ENCODE measurements at regions of chr10 and their contacts with region 1.

Region 1: GRCh38 chr10:88835096-88835909 is 16.3 kb downstream of the ANKRD22 start:
- DNase-seq: peak; percentile 95
- ATAC-seq: peak; percentile 91
- H3K4me3 Mint-ChIP-seq: no peak overlapping the region
- H3K27ac Mint-ChIP-seq: no peak overlapping the region
- H3K4me1 Mint-ChIP-seq: peaks cover 34% of the 10 kb centered on the region
- H3K27me3 Mint-ChIP-seq: no peaks in the 10 kb centered on the region

Region 2: DNA sequence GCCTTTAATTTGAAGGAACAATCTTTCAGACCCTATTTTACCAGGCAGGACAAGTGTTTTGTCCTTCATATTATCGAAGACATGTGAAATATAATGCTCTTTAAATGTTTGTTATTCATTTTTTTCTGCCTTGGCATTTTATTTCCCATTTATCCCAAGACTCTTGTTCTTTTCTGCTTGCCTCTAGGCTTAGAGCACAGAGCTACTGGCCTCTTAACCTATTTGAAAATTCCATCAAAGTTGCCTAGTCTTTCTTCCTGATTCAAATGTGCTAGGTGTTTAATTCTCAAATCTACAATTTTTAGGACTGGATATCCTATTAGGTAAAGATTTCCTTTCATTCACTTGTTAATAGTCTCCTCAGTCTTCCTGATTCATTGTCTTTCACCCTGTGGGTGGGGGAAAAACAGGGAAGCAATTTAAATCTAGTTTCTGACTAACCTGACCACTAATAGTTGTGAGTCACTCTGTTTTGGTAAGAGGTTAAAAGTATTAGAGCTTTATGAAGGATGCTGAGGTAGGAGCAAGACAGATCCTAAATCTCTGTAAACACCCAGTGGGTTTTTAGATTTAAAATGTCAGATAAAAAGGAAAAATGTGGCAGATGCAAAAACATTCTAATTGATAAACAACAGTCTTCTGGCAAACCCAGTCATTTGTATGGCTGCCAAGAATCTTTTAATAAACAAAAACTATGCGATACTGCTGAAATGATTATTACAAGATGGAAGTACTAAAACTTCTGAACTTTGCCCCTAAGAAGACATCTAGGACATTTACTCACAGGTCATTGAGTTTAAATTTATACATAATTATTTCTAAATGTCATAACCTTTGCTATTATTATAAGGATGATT is 127.6 kb before region 1 on chr10:
- CTCF ChIA-PET with region 1: no interaction called
- DNase-seq: no peak
- ATAC-seq: no peak
- H3K4me3 Mint-ChIP-seq: no peak overlapping the region
- H3K27ac Mint-ChIP-seq: no peak overlapping the region
- H3K4me1 Mint-ChIP-seq: no peaks in the 10 kb centered on the region
- H3K27me3 Mint-ChIP-seq: peaks cover 8% of the 10 kb centered on the region

Region 3: GRCh38 chr10:88851706-88852105 is 16.4 kb after region 1 on chr10 and contains the start of gene ANKRD22:
- CTCF ChIA-PET with region 1: interaction called, 24 read pairs
- DNase-seq: no peak
- ATAC-seq: no peak
- H3K4me3 Mint-ChIP-seq: no peak within 1 kb of the TSS
- H3K27ac Mint-ChIP-seq: no peak within 1 kb of the TSS
- H3K4me1 Mint-ChIP-seq: peaks cover 35% of the 10 kb centered on the region
- H3K27me3 Mint-ChIP-seq: no peaks in the 10 kb centered on the region
- total RNA-seq, gene ANKRD22: 0.37 TPM in 1 of 2 experiments, not detected in the other

Region 4: GRCh38 chr10:88880282-88881076 is 45.2 kb after region 1 on chr10:
- CTCF ChIA-PET with region 1: interaction called, 39 read pairs
- DNase-seq: peak; percentile 92
- ATAC-seq: peak; percentile 79
- H3K4me3 Mint-ChIP-seq: peak overlapping the region; percentile 99
- H3K27ac Mint-ChIP-seq: peak overlapping the region; percentile 99
- H3K4me1 Mint-ChIP-seq: peaks cover 57% of the 10 kb centered on the region
- H3K27me3 Mint-ChIP-seq: no peaks in the 10 kb centered on the region

Region 5: DNA sequence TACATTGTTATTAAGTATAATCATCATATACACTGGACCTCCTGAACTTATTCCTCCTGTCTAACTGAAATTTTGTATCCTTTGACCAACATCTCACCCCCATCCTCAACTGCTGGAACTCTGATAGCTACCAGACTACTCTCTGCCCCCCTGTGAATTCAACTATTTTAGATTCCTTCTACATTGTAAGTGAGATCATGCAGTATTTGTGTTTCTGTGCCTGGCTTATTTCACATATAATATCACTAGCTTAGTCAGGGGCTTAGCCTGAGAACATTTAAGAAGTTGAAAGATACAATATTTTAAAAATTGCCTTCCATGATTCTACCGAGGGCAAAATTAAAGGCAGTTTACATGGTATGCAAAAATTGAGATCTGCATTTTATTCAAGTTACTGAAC is 71.6 kb after region 1 on chr10:
- CTCF ChIA-PET with region 1: interaction called, 31 read pairs
- DNase-seq: no peak
- ATAC-seq: no peak
- H3K4me3 Mint-ChIP-seq: no peak overlapping the region
- H3K27ac Mint-ChIP-seq: no peak overlapping the region
- H3K4me1 Mint-ChIP-seq: peaks cover 4% of the 10 kb centered on the region
- H3K27me3 Mint-ChIP-seq: no peaks in the 10 kb centered on the region

Region 6: GRCh38 chr10:89251409-89252224 is 416.3 kb after region 1 on chr10 and contains the start of gene LIPA:
- CTCF ChIA-PET with region 1: no interaction called
- DNase-seq: peak; percentile 97
- ATAC-seq: peak; percentile 98
- H3K4me3 Mint-ChIP-seq: peak within 1 kb of the TSS; percentile 88
- H3K27ac Mint-ChIP-seq: peak within 1 kb of the TSS; percentile 82
- H3K4me1 Mint-ChIP-seq: peaks cover 28% of the 10 kb centered on the region
- H3K27me3 Mint-ChIP-seq: peaks cover 14% of the 10 kb centered on the region
- total RNA-seq, gene LIPA: 24.0 to 28.5 TPM

Measured in activated CD8-positive, alpha-beta memory T cell treated with anti-CD3 and anti-CD28 coated beads, Interleukin-2, amount 10 ng/mL, durations not matched to agents 7 days and 5 days (primary cell).